ENCODE measurements at regions of chrX and their contacts with region 1.

Region 1: GRCh38 chrX:135484641-135485289 is 35.7 kb upstream of the INTS6L start:
- DNase-seq: peak; percentile 14 to 55 (median 24)
- H3K4me3 ChIP-seq: no peak overlapping the region
- H3K27ac ChIP-seq: no peak overlapping the region
- H3K4me1 ChIP-seq: no peaks in the 10 kb centered on the region
- H3K27me3 ChIP-seq: no peaks in the 10 kb centered on the region
- CTCF ChIP-seq: peak in 5 of 6 experiments; percentile 58 to 71 (median 64)
- POLR2A ChIP-seq: no peak

Region 2: GRCh38 chrX:135572436-135572835 is 87.7 kb after region 1 on chrX:
- intact Hi-C with region 1: loop called (anchors 10 kb)
- DNase-seq: no peak
- H3K4me3 ChIP-seq: no peak overlapping the region
- H3K27ac ChIP-seq: no peak overlapping the region
- H3K4me1 ChIP-seq: no peaks in the 10 kb centered on the region
- H3K27me3 ChIP-seq: peaks cover 10% of the 10 kb centered on the region
- CTCF ChIP-seq: peak; percentile 32 to 54 (median 42)
- POLR2A ChIP-seq: no peak